CD14-positive monocyte (primary cell): ENCODE measurements at regions of chr1 and their contacts with region 1.

Region 1: GRCh38 chr1:41728403-41729202 is 190.1 kb downstream of the HIVEP3 start:
- DNase-seq: peak; percentile 63 to 80 (median 65)
- H3K4me3 ChIP-seq: peak overlapping the region in 1 of 3 experiments; percentile 31
- H3K4me3 Mint-ChIP-seq: no peak overlapping the region
- H3K27ac ChIP-seq: peak overlapping the region; percentile 97
- H3K27ac Mint-ChIP-seq: peak overlapping the region; percentile 99 to 100 (median 99)
- H3K4me1 ChIP-seq: peaks cover 95 to 99% of the 10 kb centered on the region in 2 donors
- H3K4me1 Mint-ChIP-seq: peaks cover 89% of the 10 kb centered on the region
- H3K27me3 ChIP-seq: no peaks in the 10 kb centered on the region
- H3K27me3 Mint-ChIP-seq: peaks cover 0 to 4% (median 2%) of the 10 kb centered on the region in 3 donors
- CTCF ChIP-seq: no peak

Region 2: DNA sequence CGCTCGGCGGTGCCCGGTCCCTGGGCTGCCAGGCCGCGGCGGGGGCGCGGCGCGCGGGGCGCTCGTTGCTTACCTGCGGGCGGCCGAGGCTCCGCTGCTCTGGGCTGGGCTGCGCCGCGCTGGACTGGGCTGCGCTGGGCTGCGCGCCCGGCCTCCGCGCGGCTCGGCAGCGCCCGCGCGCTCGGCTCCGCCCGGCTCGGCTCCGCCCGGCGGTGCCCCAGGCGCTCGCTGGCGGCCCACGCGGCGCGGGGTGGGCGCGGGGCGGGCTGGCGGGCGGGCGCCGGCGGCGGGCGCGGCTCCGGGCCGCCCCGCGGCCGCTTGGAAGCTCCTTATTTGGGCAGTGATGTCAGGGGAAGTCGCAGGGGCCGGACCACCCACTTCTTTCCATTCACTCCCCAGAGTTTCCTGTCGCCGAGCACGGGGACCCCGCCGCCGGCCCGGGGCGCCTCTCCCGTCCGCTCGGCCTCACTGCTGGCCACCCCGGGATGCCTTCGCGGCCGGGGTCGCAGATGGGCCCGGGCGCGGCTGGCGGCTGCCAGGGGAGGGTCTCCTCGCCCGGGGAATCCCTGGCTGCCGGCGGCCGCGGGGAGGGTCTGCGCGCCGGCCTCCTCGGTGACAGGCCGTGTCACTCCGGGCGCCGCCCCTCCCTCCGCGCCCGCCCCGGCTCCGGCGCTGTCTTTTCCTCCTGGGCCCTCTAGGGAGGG is 66.4 kb before region 1 on chr1:
- intact Hi-C with region 1: loop called (anchors 5 to 10 kb)
- DNase-seq: peak; percentile 47 to 61 (median 59)
- H3K4me3 ChIP-seq: peak overlapping the region; percentile 43 to 76 (median 75)
- H3K4me3 Mint-ChIP-seq: peak overlapping the region; percentile 15 to 52
- H3K27ac ChIP-seq: peak overlapping the region in 1 of 2 donors; percentile 69
- H3K27ac Mint-ChIP-seq: peak overlapping the region in 1 of 7 donors; percentile 74
- H3K4me1 ChIP-seq: peaks cover 60 to 66% of the 10 kb centered on the region in 2 donors
- H3K4me1 Mint-ChIP-seq: peaks cover 64% of the 10 kb centered on the region
- H3K27me3 ChIP-seq: no peaks in the 10 kb centered on the region
- H3K27me3 Mint-ChIP-seq: peaks cover 7 to 18% (median 11%) of the 10 kb centered on the region in 3 donors
- CTCF ChIP-seq: no peak

Region 3: DNA sequence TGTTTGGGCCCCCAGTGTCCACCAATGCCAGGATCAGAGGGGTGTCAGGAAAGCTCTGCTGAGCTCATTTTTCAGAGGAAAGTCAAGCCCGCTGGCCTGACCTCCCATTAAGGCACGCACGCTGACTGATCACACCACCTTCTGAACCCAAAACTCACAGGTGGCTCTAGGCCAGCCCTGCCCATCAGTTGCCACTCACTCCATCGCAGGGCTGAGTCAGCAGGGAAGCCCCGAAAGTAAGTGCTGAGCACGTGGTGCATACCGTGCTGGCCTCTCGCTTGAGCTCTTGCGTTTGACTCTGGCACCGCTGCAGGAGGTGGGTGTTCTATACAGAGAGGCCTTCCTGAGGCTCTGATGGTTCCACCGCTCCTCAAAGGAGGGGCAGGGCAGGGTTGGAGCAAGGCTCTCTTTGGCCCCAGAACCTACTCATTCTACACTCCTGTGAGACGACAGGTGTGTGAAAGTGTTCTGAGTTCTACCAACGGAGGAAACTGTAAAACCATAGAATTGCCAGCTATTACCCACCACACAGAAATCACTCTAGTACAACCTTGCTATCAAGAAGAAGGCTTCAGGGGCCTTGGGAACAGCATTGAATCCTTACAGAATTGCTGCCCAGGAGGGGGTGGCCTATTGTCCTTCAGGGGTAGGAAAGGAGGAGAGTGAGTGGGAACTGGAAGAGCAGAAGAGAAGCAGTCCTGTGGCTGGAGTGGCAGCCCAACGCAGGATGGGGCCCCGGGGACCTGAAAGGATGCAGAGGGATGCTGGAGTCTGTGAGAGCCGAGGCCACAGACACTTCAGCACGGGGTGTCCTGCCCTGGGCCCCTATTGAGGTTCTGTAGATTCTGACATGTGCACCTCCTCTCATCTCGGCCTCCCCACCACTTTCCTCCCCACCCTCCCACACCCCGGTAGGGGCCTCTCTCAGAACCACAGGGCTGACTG is 29.4 kb before region 1 on chr1:
- intact Hi-C with region 1: no loop called
- DNase-seq: peak in 1 of 3 donors; percentile 24
- H3K4me3 ChIP-seq: no peak overlapping the region
- H3K4me3 Mint-ChIP-seq: no peak overlapping the region
- H3K27ac ChIP-seq: no peak overlapping the region
- H3K27ac Mint-ChIP-seq: peak overlapping the region in 1 of 7 donors; percentile 20
- H3K4me1 ChIP-seq: peaks cover 17 to 20% of the 10 kb centered on the region in 2 donors
- H3K4me1 Mint-ChIP-seq: peaks cover 23% of the 10 kb centered on the region
- H3K27me3 ChIP-seq: no peaks in the 10 kb centered on the region
- H3K27me3 Mint-ChIP-seq: peaks cover 1 to 4% (median 3%) of the 10 kb centered on the region in 3 donors
- CTCF ChIP-seq: no peak

Region 4: GRCh38 chr1:41739061-41739955 is 10.7 kb after region 1 on chr1:
- intact Hi-C with region 1: loop called in 1 of 2 experiments (anchors 1 kb)
- DNase-seq: peak; percentile 97 to 99 (median 97)
- H3K4me3 ChIP-seq: peak overlapping the region; percentile 5 to 57 (median 32)
- H3K4me3 Mint-ChIP-seq: peak overlapping the region; percentile 72 to 83
- H3K27ac ChIP-seq: peak overlapping the region; percentile 98 to 99
- H3K27ac Mint-ChIP-seq: peak overlapping the region; percentile 99 to 100 (median 99)
- H3K4me1 ChIP-seq: peaks cover 84 to 92% of the 10 kb centered on the region in 2 donors
- H3K4me1 Mint-ChIP-seq: peaks cover 96% of the 10 kb centered on the region
- H3K27me3 ChIP-seq: no peaks in the 10 kb centered on the region
- H3K27me3 Mint-ChIP-seq: peaks cover 0 to 2% (median 0%) of the 10 kb centered on the region in 3 donors
- CTCF ChIP-seq: no peak

Region 5: DNA sequence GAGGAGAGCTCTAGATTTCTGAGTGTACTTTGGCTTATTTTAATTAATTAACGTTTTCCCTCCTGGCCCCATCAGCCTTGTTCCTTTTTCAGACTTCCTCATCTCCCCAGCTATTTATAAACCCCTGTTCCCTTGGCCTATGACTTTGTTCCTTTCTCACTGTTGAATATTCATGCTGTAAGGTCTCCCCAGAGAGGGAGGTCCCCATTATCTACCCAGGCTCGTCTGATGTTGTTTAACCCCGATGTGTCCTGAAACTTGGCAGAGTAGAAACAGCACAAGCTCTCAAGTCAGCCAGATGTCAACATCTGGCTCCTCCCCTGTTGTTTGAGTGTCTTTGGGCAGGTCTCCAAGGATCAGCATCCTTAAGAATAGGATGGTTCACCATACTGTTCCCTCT is 36.5 kb after region 1 on chr1:
- intact Hi-C with region 1: loop called (anchors 5 kb)
- DNase-seq: peak; percentile 69 to 81 (median 77)
- H3K4me3 ChIP-seq: peak overlapping the region; percentile 19 to 66 (median 26)
- H3K4me3 Mint-ChIP-seq: peak overlapping the region; percentile 65 to 73
- H3K27ac ChIP-seq: peak overlapping the region; percentile 84 to 94
- H3K27ac Mint-ChIP-seq: peak overlapping the region; percentile 94 to 98 (median 96)
- H3K4me1 ChIP-seq: peaks cover 71 to 82% of the 10 kb centered on the region in 2 donors
- H3K4me1 Mint-ChIP-seq: peaks cover 86% of the 10 kb centered on the region
- H3K27me3 ChIP-seq: no peaks in the 10 kb centered on the region
- H3K27me3 Mint-ChIP-seq: peaks cover 0 to 2% (median 0%) of the 10 kb centered on the region in 3 donors
- CTCF ChIP-seq: no peak

Region 6: GRCh38 chr1:41802532-41803501 is 74.2 kb after region 1 on chr1:
- intact Hi-C with region 1: loop called in 1 of 2 experiments (anchors 5 kb)
- DNase-seq: peak; percentile 88 to 94 (median 93)
- H3K4me3 ChIP-seq: peak overlapping the region in 1 of 3 experiments; percentile 52
- H3K4me3 Mint-ChIP-seq: peak overlapping the region; percentile 55 to 68
- H3K27ac ChIP-seq: peak overlapping the region; percentile 86 to 95
- H3K27ac Mint-ChIP-seq: peak overlapping the region; percentile 93 to 98 (median 96)
- H3K4me1 ChIP-seq: peaks cover 62 to 78% of the 10 kb centered on the region in 2 donors
- H3K4me1 Mint-ChIP-seq: peaks cover 82% of the 10 kb centered on the region
- H3K27me3 ChIP-seq: no peaks in the 10 kb centered on the region
- H3K27me3 Mint-ChIP-seq: no peaks in the 10 kb centered on the region
- CTCF ChIP-seq: no peak